Pancreas (tissue), 10 donors: ENCODE measurements at regions of chr11 and their contacts with region 1.

Region 1: GRCh38 chr11:19013181-19013857 is 47.2 kb downstream of the MRGPRX2 start:
- DNase-seq: no peak
- ATAC-seq: no peak
- H3K4me3 ChIP-seq: no peak overlapping the region
- H3K27ac ChIP-seq: no peak overlapping the region
- H3K4me1 ChIP-seq: no peaks in the 10 kb centered on the region
- H3K27me3 ChIP-seq: no peaks in the 10 kb centered on the region
- CTCF ChIP-seq: no peak

Region 2: DNA sequence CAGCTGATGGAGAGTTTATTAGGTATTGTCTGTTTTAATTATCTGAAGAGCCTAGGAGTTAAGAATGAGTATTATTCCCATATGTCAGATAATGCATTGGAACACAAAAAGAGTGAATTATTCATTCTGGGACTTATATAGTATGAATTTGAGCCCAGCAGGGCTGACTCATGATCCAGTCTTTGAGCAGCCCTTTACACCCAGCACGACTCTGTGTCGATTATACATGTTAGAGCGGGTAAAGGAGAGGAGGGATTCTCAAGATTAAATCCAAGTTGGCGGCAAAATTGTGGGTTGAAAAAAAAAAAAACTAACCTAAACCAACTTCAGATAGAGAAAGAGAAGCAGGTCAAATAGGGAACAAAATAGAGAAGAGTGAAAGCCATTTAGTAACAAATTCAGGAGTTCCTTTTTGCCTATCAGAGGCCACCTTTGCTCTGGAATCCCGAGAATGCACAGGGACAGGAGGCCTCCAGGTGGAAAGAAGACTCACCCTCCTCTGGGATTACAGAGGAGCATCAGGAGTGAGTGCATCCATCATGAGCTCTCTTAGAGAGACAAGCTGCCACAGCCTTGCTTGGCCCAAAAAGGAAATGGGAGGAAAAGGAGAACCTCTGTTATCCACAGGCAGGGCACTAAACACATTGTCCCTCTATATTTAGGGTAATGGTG is 77.2 kb before region 1 on chr11:
- intact Hi-C with region 1: loop called in 1 of 3 experiments (anchors 10 kb)
- DNase-seq: no peak
- ATAC-seq: no peak
- H3K4me3 ChIP-seq: no peak overlapping the region
- H3K27ac ChIP-seq: no peak overlapping the region
- H3K4me1 ChIP-seq: no peaks in the 10 kb centered on the region
- H3K27me3 ChIP-seq: no peaks in the 10 kb centered on the region
- CTCF ChIP-seq: no peak